KBM-7 (cell line): ENCODE measurements at regions of chr10 and their contacts with region 1.

Region 1: GRCh38 chr10:47309403-47310089 is 9.5 kb downstream of the GDF10 start:
- DNase-seq: no peak

Region 2: GRCh38 chr10:47024399-47025252 is 284.9 kb before region 1 on chr10:
- in situ Hi-C with region 1: loop called (anchors 10 kb)
- DNase-seq: peak; percentile 58